Panc1 (cell line): ENCODE measurements at regions of chr3 and their contacts with region 1.

Region 1: GRCh38 chr3:15405448-15406050 is 21.8 kb downstream of the METTL6 start:
- DNase-seq: no peak
- ATAC-seq: peak; percentile 78; the same call in 1 of the 2 replicates
- H3K4me3 ChIP-seq: no peak overlapping the region
- H3K27ac ChIP-seq: no peak overlapping the region
- H3K4me1 ChIP-seq: no peaks in the 10 kb centered on the region
- H3K27me3 ChIP-seq: no peaks in the 10 kb centered on the region
- CTCF ChIP-seq: peak; percentile 59; the same call in 1 of the 2 replicates

Region 2: GRCh38 chr3:15092686-15093085 is 312.9 kb before region 1 on chr3:
- CTCF ChIA-PET with region 1: no interaction called
- POLR2A ChIA-PET with region 1: no interaction called
- in situ Hi-C with region 1: no loop called
- intact Hi-C with region 1: no loop called
- DNase-seq: no peak
- ATAC-seq: no peak
- H3K4me3 ChIP-seq: no peak overlapping the region
- H3K27ac ChIP-seq: no peak overlapping the region
- H3K4me1 ChIP-seq: no peaks in the 10 kb centered on the region
- H3K27me3 ChIP-seq: no peaks in the 10 kb centered on the region
- CTCF ChIP-seq: no peak

Region 3: DNA sequence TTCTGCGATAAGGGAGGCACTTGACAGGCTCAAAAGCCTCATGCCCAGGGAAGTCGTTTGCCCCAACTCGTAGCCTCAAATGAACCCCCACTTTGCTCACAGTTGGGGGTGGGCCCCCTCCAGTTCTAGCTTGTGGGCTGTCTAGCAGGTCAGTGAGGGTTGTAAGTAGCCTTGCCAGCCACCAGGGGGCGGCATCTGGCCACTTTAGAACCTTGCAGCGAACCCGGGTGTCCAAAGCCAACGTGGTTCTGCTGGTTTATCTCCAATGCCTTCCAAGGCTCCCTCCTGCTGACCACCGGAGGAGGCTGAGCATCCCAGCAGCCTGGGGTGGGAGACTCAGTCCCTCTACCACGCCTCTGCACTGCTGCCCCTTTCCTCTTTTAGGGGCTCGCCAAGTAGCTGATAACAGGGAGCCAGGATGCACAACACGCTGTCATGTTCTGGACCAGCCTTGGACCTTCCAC is 297.4 kb before region 1 on chr3:
- CTCF ChIA-PET with region 1: no interaction called
- POLR2A ChIA-PET with region 1: no interaction called
- in situ Hi-C with region 1: no loop called
- intact Hi-C with region 1: loop called (anchors 10 kb)
- DNase-seq: peak; percentile 48
- ATAC-seq: peak; percentile 92
- H3K4me3 ChIP-seq: peak overlapping the region in 1 of 2 experiments; percentile 3; a peak in 1 of 4 replicates
- H3K27ac ChIP-seq: no peak overlapping the region
- H3K4me1 ChIP-seq: no peaks in the 10 kb centered on the region
- H3K27me3 ChIP-seq: no peaks in the 10 kb centered on the region
- CTCF ChIP-seq: peak; percentile 89

Region 4: GRCh38 chr3:15205934-15206661 is 199.5 kb before region 1 on chr3 and contains the start of gene CAPN7:
- CTCF ChIA-PET with region 1: no interaction called
- POLR2A ChIA-PET with region 1: no interaction called
- in situ Hi-C with region 1: no loop called
- intact Hi-C with region 1: loop called (anchors 10 kb)
- DNase-seq: no peak
- ATAC-seq: peak; percentile 98
- H3K4me3 ChIP-seq: peak within 1 kb of the TSS; percentile 88 to 91
- H3K27ac ChIP-seq: peak within 1 kb of the TSS; percentile 84
- H3K4me1 ChIP-seq: peaks cover 5% of the 10 kb centered on the region
- H3K27me3 ChIP-seq: no peaks in the 10 kb centered on the region
- CTCF ChIP-seq: 0 out of 2 replicates have a peak, but pooled peaks have one; percentile 21
- total RNA-seq, gene CAPN7: 26.5 TPM

Region 5: GRCh38 chr3:15268033-15268631 is 137.4 kb before region 1 on chr3:
- CTCF ChIA-PET with region 1: interaction called, 12 read pairs
- POLR2A ChIA-PET with region 1: no interaction called
- in situ Hi-C with region 1: no loop called
- intact Hi-C with region 1: loop called (anchors 2 kb)
- DNase-seq: peak; percentile 46
- ATAC-seq: peak; percentile 86
- H3K4me3 ChIP-seq: no peak overlapping the region
- H3K27ac ChIP-seq: peak overlapping the region; percentile 7; the same call in 1 of the 2 replicates
- H3K4me1 ChIP-seq: peaks cover 18% of the 10 kb centered on the region
- H3K27me3 ChIP-seq: no peaks in the 10 kb centered on the region
- CTCF ChIP-seq: peak; percentile 93

Region 6: GRCh38 chr3:15367059-15367458 is 38.5 kb before region 1 on chr3:
- CTCF ChIA-PET with region 1: no interaction called
- POLR2A ChIA-PET with region 1: no interaction called
- in situ Hi-C with region 1: no loop called
- intact Hi-C with region 1: no loop called
- DNase-seq: no peak
- ATAC-seq: no peak
- H3K4me3 ChIP-seq: no peak overlapping the region
- H3K27ac ChIP-seq: no peak overlapping the region
- H3K4me1 ChIP-seq: no peaks in the 10 kb centered on the region; the same call in 1 of the 2 replicates
- H3K27me3 ChIP-seq: no peaks in the 10 kb centered on the region
- CTCF ChIP-seq: no peak